ENCODE measurements at regions of chr22 and their contacts with region 1.

Region 1: DNA sequence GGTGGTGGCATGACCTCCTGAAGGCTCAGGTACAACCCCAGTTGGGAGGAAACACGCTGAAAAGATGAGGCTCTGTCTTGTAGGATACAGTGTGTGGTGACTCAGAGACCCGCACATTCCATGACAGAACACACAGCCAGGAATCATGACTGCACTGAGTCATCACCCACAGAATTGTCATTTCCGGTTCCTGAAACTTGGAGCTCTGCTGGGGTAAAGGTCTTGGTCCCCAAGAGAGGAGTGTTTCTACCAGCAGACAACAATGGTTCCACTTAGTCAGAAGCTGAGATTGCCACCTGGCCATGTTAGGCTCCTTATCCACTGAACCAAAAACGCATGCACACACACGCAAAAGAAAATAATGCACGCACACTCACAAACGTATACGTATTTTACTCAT is 31.5 kb upstream of the CYB5R3 start:
- DNase-seq: peak; percentile 95
- H3K4me3 ChIP-seq: no peak overlapping the region
- H3K27ac ChIP-seq: peak overlapping the region; percentile 67
- H3K4me1 ChIP-seq: peaks cover 14% of the 10 kb centered on the region
- H3K27me3 ChIP-seq: no peaks in the 10 kb centered on the region
- CTCF ChIP-seq: no peak

Region 2: DNA sequence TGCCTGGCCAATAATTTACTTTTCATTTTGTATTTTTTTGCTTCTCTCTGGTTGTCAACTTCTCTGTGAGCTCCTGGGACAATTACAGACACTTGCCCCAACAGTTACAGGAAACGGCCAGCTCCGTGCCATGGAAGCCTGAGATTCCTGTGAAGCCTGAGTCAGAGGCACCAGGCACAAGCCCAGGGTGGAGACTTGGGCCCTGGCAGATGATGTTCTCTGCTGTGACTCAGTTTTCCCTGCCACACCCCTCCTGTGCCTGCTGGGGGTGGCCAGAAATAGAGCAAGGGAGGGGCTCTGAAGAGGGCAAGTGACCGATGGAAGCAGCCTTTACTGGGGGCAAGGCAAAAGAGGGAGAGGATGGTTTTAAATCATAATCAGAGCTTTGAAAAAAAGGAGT is 45.1 kb before region 1 on chr22:
- CTCF ChIA-PET with region 1: no interaction called
- dilution Hi-C with region 1: loop called (anchors 5 kb)
- in situ Hi-C with region 1: no loop called
- intact Hi-C with region 1: no loop called
- DNase-seq: peak; percentile 89
- H3K4me3 ChIP-seq: no peak overlapping the region
- H3K27ac ChIP-seq: peak overlapping the region; percentile 76
- H3K4me1 ChIP-seq: peaks cover 24% of the 10 kb centered on the region
- H3K27me3 ChIP-seq: no peaks in the 10 kb centered on the region
- CTCF ChIP-seq: no peak

Region 3: DNA sequence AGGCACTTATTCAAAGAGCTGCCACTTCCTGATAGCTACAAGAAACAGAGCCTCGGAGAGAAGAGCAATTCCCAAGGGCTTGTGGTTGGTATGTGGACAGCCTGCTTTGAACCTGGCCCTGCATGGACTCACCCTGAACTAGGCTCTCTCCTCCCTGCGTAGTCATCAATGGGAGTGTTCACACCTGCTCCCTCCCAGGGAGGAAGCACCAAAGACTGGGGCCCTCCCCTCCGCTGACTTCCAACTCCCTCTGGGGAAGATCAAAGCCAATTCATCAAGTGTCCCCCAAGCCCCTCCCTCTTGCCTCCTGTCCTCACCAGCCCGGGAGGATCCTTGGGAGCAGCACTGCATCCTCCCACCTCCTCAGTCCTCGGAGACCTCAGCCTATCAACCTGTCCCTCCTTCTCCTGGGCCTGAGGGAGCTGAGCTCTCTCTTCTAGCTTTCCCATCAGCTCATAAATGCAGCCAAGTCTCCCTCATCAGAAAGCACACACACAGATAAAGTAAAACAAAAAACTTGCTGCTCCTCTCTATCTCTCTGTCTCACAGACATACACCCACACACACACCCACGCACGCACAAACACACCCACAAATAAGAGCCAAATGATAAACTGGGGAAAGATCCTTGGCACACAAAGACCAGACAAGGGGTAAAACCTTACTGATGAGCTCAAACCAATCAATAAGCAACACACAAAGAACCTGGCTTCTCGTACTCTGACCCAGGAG is 36.7 kb after region 1 on chr22:
- CTCF ChIA-PET with region 1: no interaction called
- dilution Hi-C with region 1: no loop called
- in situ Hi-C with region 1: no loop called
- intact Hi-C with region 1: no loop called
- DNase-seq: peak; percentile 11
- H3K4me3 ChIP-seq: no peak overlapping the region
- H3K27ac ChIP-seq: no peak overlapping the region
- H3K4me1 ChIP-seq: peaks cover 10% of the 10 kb centered on the region
- H3K27me3 ChIP-seq: peaks cover 14% of the 10 kb centered on the region
- CTCF ChIP-seq: no peak

Region 4: GRCh38 chr22:43136255-43136654 is 455.6 kb after region 1 on chr22:
- CTCF ChIA-PET with region 1: no interaction called
- dilution Hi-C with region 1: loop called (anchors 5 kb)
- in situ Hi-C with region 1: no loop called
- intact Hi-C with region 1: no loop called
- DNase-seq: no peak
- H3K4me3 ChIP-seq: no peak overlapping the region
- H3K27ac ChIP-seq: no peak overlapping the region
- H3K4me1 ChIP-seq: no peaks in the 10 kb centered on the region
- H3K27me3 ChIP-seq: no peaks in the 10 kb centered on the region
- CTCF ChIP-seq: peak; percentile 44 to 61

Region 5: GRCh38 chr22:43151251-43152002 is 470.8 kb after region 1 on chr22 and contains the start of gene TSPO:
- CTCF ChIA-PET with region 1: no interaction called
- dilution Hi-C with region 1: no loop called
- in situ Hi-C with region 1: no loop called
- intact Hi-C with region 1: no loop called
- DNase-seq: peak; percentile 33
- H3K4me3 ChIP-seq: peak within 1 kb of the TSS; percentile 68 to 96 (median 87)
- H3K27ac ChIP-seq: peak within 1 kb of the TSS; percentile 64
- H3K4me1 ChIP-seq: peaks cover 35% of the 10 kb centered on the region
- H3K27me3 ChIP-seq: no peaks in the 10 kb centered on the region
- CTCF ChIP-seq: no peak
- total RNA-seq, gene TSPO: 267 to 360 TPM